ENCODE measurements at regions of chr3 and their contacts with region 1.

Region 1: GRCh38 chr3:183825456-183826161 is at the start of gene MAP6D1:
- DNase-seq: peak; percentile 54
- ATAC-seq: peak; percentile 70
- H3K4me3 ChIP-seq: peak within 1 kb of the TSS; percentile 92
- H3K27ac ChIP-seq: no peak within 1 kb of the TSS
- H3K4me1 ChIP-seq: peaks cover 8% of the 10 kb centered on the region
- H3K27me3 ChIP-seq: no peaks in the 10 kb centered on the region
- CTCF ChIP-seq: peak; percentile 46
- total RNA-seq, gene MAP6D1: 12.4 and 12.6 TPM in 2 replicates

Region 2: DNA sequence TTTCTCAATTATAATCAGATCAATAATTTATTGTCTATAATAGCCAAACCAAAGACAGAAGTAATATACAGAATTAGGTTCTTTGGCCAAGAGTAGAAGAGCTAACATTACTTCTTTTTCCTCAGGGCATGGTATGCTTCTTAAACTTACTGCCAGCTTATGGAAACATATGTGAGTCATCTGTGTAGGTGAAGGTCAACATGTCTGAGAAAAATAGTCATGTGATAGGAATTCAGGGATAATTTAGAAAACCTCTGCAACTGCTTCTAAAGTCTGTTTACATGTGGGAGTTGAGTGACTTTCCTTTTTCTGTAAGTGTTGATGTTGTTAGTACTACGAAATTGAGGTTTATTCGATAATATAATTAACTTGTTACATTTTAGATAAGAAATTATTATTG is 19.0 kb after region 1 on chr3:
- CTCF ChIA-PET with region 1: no interaction called
- POLR2A ChIA-PET with region 1: no interaction called
- intact Hi-C with region 1: loop called (anchors 2 kb)
- DNase-seq: peak; percentile 87
- ATAC-seq: peak; percentile 71
- H3K4me3 ChIP-seq: no peak overlapping the region
- H3K27ac ChIP-seq: peak overlapping the region; percentile 69
- H3K4me1 ChIP-seq: peaks cover 22% of the 10 kb centered on the region
- H3K27me3 ChIP-seq: no peaks in the 10 kb centered on the region
- CTCF ChIP-seq: no peak

Region 3: GRCh38 chr3:184234224-184234623 is 408.6 kb after region 1 on chr3:
- CTCF ChIA-PET with region 1: no interaction called
- POLR2A ChIA-PET with region 1: no interaction called
- intact Hi-C with region 1: no loop called
- DNase-seq: peak; percentile 95
- ATAC-seq: peak; percentile 85
- H3K4me3 ChIP-seq: no peak overlapping the region
- H3K27ac ChIP-seq: no peak overlapping the region
- H3K4me1 ChIP-seq: peaks cover 19% of the 10 kb centered on the region
- H3K27me3 ChIP-seq: peaks cover 10% of the 10 kb centered on the region
- CTCF ChIP-seq: peak; percentile 56

Region 4: GRCh38 chr3:184443380-184443779 is 617.8 kb after region 1 on chr3:
- CTCF ChIA-PET with region 1: no interaction called
- POLR2A ChIA-PET with region 1: no interaction called
- intact Hi-C with region 1: no loop called
- DNase-seq: peak; percentile 14
- ATAC-seq: peak; percentile 31; the same call in 1 of the 2 replicates
- H3K4me3 ChIP-seq: no peak overlapping the region
- H3K27ac ChIP-seq: no peak overlapping the region
- H3K4me1 ChIP-seq: peaks cover 10% of the 10 kb centered on the region
- H3K27me3 ChIP-seq: peaks cover 5% of the 10 kb centered on the region
- CTCF ChIP-seq: no peak